Right cardiac atrium (tissue), 5 donors: ENCODE measurements at regions of chrX and their contacts with region 1.

Region 1: DNA sequence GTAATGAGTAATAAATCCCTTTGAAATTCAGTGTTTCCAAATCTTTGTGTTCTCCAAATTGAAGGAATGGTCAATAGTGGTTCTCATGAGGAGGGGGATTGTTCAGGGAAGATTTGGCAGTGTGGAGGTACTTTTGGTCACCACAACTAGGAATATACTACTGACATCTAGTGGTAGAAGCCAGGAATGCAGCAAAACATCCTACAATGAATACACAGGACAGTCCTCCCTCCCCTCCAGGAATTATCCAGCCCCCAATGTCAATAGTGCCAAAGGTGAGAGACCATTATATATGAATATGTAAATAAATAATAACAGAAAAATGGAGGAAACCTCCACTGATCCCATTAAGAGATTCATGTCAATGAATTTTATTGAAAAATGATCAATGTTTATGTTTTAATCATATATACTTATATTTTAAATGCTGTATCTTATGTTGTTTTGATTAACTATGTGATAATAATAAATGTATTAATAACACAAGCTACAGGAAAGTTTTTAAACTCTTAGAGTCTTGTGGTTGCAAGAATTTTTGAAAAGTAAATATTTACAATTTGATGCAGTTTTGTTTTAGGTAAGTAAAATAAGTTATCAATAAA is 14.4 kb upstream of the FAM9A start:
- DNase-seq: no peak
- ATAC-seq: no peak
- H3K4me3 ChIP-seq: no peak overlapping the region
- H3K27ac ChIP-seq: no peak overlapping the region
- H3K4me1 ChIP-seq: no peaks in the 10 kb centered on the region
- H3K27me3 ChIP-seq: no peaks in the 10 kb centered on the region

Region 2: DNA sequence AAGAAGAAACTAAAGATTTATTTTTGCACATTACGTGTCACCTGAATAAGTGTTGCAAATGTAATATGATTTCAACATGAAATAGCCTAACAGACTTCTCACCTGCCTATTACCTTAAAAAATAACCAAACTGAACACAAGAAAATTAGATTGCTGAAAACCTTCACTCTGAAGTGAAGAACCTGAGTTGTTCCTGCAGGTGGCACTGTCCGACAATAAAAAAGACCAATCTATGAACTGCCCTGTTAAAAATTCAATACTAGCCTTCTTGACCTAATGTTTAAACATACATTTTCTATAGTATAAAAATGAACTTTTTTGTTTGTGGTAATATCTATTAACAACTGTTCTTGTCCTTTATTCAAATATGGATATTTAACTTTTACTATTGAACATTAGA is 819.2 kb before region 1 on chrX:
- intact Hi-C with region 1: loop called in 2 of 4 experiments (anchors 10 kb)
- DNase-seq: no peak
- ATAC-seq: no peak
- H3K4me3 ChIP-seq: no peak overlapping the region
- H3K27ac ChIP-seq: no peak overlapping the region
- H3K4me1 ChIP-seq: peaks cover 1% of the 10 kb centered on the region
- H3K27me3 ChIP-seq: no peaks in the 10 kb centered on the region